CD8-positive, alpha-beta memory T cell (primary cell): ENCODE measurements at regions of chrX and their contacts with region 1.

Region 1: DNA sequence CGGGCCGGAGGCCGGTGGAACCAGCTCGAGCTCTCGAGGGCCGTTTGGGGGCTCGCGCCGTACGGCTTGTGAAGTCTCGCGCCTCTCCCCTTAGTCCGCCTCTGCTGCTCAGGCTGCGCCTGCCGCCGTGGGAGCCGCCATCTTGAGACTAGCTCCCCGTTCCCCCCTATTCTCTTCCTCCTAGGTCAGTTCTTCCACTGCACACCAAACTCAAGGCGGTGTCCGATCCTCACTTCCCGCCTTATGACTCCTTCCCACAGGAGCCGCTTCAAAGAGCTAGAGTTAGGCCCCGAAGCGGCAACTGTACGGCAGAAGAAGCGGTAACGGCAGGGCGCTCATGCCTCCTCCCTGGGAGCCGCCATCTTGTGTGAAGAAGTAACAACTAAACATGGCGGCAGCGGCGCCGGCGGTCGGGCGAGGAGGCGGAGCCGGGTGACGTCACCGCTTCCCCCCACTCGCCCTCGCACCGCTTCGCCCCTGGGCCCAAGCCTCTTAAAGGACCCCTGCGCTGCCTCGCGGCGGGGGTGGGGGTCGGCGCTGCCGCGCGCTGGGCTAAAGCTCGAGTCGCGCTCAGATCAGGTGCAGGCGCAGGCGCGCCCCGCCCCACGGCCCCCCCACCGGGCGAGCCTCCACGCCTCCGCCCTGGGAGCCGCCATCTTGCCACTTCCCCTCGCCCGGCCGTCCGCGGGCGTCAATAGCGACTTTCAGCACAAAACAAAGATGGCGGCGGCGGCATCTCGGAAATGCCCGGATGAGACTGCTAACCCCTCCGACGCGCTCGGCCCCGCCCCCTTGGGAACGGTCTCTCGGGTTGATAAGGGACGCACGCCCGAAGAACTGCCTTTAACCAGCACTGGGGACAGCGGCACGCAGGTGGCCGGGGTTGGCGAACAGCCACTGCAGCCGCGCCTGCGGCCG is at the start of gene HCFC1:
- DNase-seq: peak; percentile 85 to 97 (median 95)
- H3K4me3 ChIP-seq: peak within 1 kb of the TSS; percentile 93
- H3K4me3 Mint-ChIP-seq: peak within 1 kb of the TSS; percentile 95 to 100 (median 100)
- H3K27ac ChIP-seq: peak within 1 kb of the TSS; percentile 94
- H3K27ac Mint-ChIP-seq: peak within 1 kb of the TSS; percentile 98 to 100 (median 100)
- H3K4me1 ChIP-seq: peaks cover 30% of the 10 kb centered on the region
- H3K4me1 Mint-ChIP-seq: peaks cover 42 to 46% (median 45%) of the 10 kb centered on the region in 3 donors
- H3K27me3 ChIP-seq: no peaks in the 10 kb centered on the region
- H3K27me3 Mint-ChIP-seq: peaks cover 0 to 10% of the 10 kb centered on the region in 2 donors
- total RNA-seq, gene HCFC1: 152 to 156 TPM

Region 2: GRCh38 chrX:153818571-153819383 is 152.9 kb before region 1 on chrX:
- CTCF ChIA-PET with region 1: no interaction called
- POLR2A ChIA-PET with region 1: no interaction called
- DNase-seq: peak; percentile 47 to 61 (median 58)
- H3K4me3 ChIP-seq: no peak overlapping the region
- H3K4me3 Mint-ChIP-seq: peak overlapping the region in 6 of 7 donors; percentile 50 to 89 (median 56)
- H3K27ac ChIP-seq: no peak overlapping the region
- H3K27ac Mint-ChIP-seq: peak overlapping the region in 4 of 8 donors; percentile 30 to 88 (median 64)
- H3K4me1 ChIP-seq: peaks cover 51% of the 10 kb centered on the region
- H3K4me1 Mint-ChIP-seq: peaks cover 52 to 67% (median 55%) of the 10 kb centered on the region in 3 donors
- H3K27me3 ChIP-seq: no peaks in the 10 kb centered on the region
- H3K27me3 Mint-ChIP-seq: peaks cover 0 to 15% of the 10 kb centered on the region in 2 donors

Region 3: DNA sequence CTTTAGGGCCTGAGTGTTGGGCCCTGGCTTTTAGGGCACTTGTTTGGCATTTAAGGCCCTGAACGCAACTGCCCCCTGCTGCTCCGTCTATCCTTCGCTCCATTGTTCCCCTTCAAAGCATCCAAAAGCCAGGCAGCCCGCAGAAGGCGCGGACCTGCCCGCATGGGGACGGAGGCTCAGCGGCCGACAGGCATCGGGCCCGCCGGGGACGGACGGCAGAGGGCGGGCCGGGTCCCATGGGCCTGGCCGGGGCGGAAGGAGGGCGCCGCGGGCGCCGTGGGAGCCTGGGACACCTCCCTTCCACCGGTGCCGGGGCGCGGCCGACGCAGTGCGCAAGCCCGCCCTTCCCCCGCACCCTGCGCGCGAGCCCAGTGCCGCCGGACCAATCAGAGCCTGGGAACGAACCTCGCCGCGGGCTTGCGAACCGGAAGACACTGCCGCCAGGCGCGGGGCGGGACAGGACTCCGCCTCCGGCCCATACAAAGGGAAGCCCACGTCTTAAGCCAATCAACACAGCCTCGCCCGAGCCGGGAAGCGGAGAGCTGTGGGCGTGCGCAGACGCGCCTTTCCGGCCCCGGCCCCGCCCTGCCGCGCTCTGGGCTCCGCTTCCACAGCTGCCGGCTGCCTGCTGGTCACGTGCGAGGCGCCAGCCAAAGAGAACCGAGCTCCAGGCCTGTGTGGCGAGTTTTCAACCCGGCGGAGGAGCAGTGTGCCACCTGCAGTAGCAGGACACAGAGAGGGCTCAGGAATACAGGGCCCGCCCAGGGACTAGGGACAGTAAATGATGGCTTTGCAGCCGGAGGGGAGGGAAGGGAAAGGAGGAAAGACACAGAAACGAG is 43.6 kb before region 1 on chrX:
- CTCF ChIA-PET with region 1: interaction called, 6 read pairs
- POLR2A ChIA-PET with region 1: interaction called, 27 read pairs
- DNase-seq: peak; percentile 86 to 98 (median 96)
- H3K4me3 ChIP-seq: peak overlapping the region; percentile 86
- H3K4me3 Mint-ChIP-seq: peak overlapping the region; percentile 89 to 95 (median 91)
- H3K27ac ChIP-seq: peak overlapping the region; percentile 91
- H3K27ac Mint-ChIP-seq: peak overlapping the region; percentile 91 to 100 (median 99)
- H3K4me1 ChIP-seq: peaks cover 11% of the 10 kb centered on the region
- H3K4me1 Mint-ChIP-seq: peaks cover 43 to 61% (median 46%) of the 10 kb centered on the region in 3 donors
- H3K27me3 ChIP-seq: no peaks in the 10 kb centered on the region
- H3K27me3 Mint-ChIP-seq: no peaks in the 10 kb centered on the region

Region 4: GRCh38 chrX:153947009-153947769 is 24.5 kb before region 1 on chrX:
- CTCF ChIA-PET with region 1: interaction called, 54 read pairs
- POLR2A ChIA-PET with region 1: interaction called, 5 read pairs
- DNase-seq: peak; percentile 64 to 85 (median 75)
- H3K4me3 ChIP-seq: no peak overlapping the region
- H3K4me3 Mint-ChIP-seq: peak overlapping the region in 4 of 7 donors; percentile 0 to 17 (median 10)
- H3K27ac ChIP-seq: no peak overlapping the region
- H3K27ac Mint-ChIP-seq: peak overlapping the region in 7 of 8 donors; percentile 59 to 93 (median 78)
- H3K4me1 ChIP-seq: peaks cover 13% of the 10 kb centered on the region
- H3K4me1 Mint-ChIP-seq: peaks cover 9 to 15% (median 13%) of the 10 kb centered on the region in 3 donors
- H3K27me3 ChIP-seq: no peaks in the 10 kb centered on the region
- H3K27me3 Mint-ChIP-seq: peaks cover 0 to 2% of the 10 kb centered on the region in 2 donors

Region 5: GRCh38 chrX:153981771-153982533 is 10.2 kb after region 1 on chrX:
- CTCF ChIA-PET with region 1: interaction called, 9 read pairs
- POLR2A ChIA-PET with region 1: interaction called, 15 read pairs
- DNase-seq: peak; percentile 29 to 64 (median 51)
- H3K4me3 ChIP-seq: peak overlapping the region; percentile 23
- H3K4me3 Mint-ChIP-seq: peak overlapping the region; percentile 71 to 89 (median 76)
- H3K27ac ChIP-seq: no peak overlapping the region
- H3K27ac Mint-ChIP-seq: peak overlapping the region; percentile 91 to 99 (median 95)
- H3K4me1 ChIP-seq: peaks cover 55% of the 10 kb centered on the region
- H3K4me1 Mint-ChIP-seq: peaks cover 37 to 53% (median 43%) of the 10 kb centered on the region in 3 donors
- H3K27me3 ChIP-seq: no peaks in the 10 kb centered on the region
- H3K27me3 Mint-ChIP-seq: peaks cover 0 to 6% of the 10 kb centered on the region in 2 donors

Region 6: GRCh38 chrX:154013614-154014360 is 42.1 kb after region 1 on chrX:
- CTCF ChIA-PET with region 1: interaction called, 12 read pairs
- POLR2A ChIA-PET with region 1: interaction called, 4 read pairs
- DNase-seq: peak; percentile 24 to 66 (median 49)
- H3K4me3 ChIP-seq: no peak overlapping the region
- H3K4me3 Mint-ChIP-seq: peak overlapping the region in 1 of 7 donors; percentile 63
- H3K27ac ChIP-seq: no peak overlapping the region
- H3K27ac Mint-ChIP-seq: peak overlapping the region in 6 of 8 donors; percentile 29 to 89 (median 64)
- H3K4me1 ChIP-seq: no peaks in the 10 kb centered on the region
- H3K4me1 Mint-ChIP-seq: peaks cover 7 to 23% (median 11%) of the 10 kb centered on the region in 3 donors
- H3K27me3 ChIP-seq: no peaks in the 10 kb centered on the region
- H3K27me3 Mint-ChIP-seq: peaks cover 0 to 5% of the 10 kb centered on the region in 2 donors

Region 7: DNA sequence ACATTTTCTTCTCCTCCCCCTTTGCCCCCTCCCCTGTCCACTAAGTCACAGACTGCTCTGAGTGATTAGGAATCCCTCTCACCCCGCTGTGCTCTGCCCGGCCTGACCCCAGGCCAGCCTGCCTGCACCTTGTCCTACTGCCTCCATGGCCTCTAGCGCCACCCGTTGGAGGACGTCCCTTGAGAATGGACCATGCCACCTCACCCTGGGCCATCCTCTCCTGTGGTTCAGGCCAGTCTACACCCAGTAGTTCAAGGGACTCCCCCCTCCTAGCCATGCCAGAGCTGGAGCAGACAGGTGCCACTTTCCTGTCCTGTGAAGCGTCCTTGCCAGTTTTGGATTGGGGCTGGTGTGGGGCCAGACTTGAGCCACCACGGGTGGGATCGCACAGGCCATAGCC is 57.7 kb after region 1 on chrX:
- CTCF ChIA-PET with region 1: no interaction called
- POLR2A ChIA-PET with region 1: no interaction called
- DNase-seq: no peak
- H3K4me3 ChIP-seq: no peak overlapping the region
- H3K4me3 Mint-ChIP-seq: no peak overlapping the region
- H3K27ac ChIP-seq: no peak overlapping the region
- H3K27ac Mint-ChIP-seq: peak overlapping the region in 1 of 8 donors; percentile 69
- H3K4me1 ChIP-seq: no peaks in the 10 kb centered on the region
- H3K4me1 Mint-ChIP-seq: peaks cover 4 to 13% (median 9%) of the 10 kb centered on the region in 3 donors
- H3K27me3 ChIP-seq: no peaks in the 10 kb centered on the region
- H3K27me3 Mint-ChIP-seq: peaks cover 0 to 12% of the 10 kb centered on the region in 2 donors

Region 8: GRCh38 chrX:154068560-154068959 is 96.9 kb after region 1 on chrX:
- CTCF ChIA-PET with region 1: no interaction called
- POLR2A ChIA-PET with region 1: interaction called, 12 read pairs
- DNase-seq: no peak
- H3K4me3 ChIP-seq: no peak overlapping the region
- H3K4me3 Mint-ChIP-seq: no peak overlapping the region
- H3K27ac ChIP-seq: no peak overlapping the region
- H3K27ac Mint-ChIP-seq: peak overlapping the region in 4 of 8 donors; percentile 17 to 57 (median 44)
- H3K4me1 ChIP-seq: peaks cover 50% of the 10 kb centered on the region
- H3K4me1 Mint-ChIP-seq: peaks cover 42 to 74% (median 62%) of the 10 kb centered on the region in 3 donors
- H3K27me3 ChIP-seq: no peaks in the 10 kb centered on the region
- H3K27me3 Mint-ChIP-seq: peaks cover 0 to 9% of the 10 kb centered on the region in 2 donors